ENCODE measurements at regions of chr13 and their contacts with region 1.

Region 1: GRCh38 chr13:108342369-108343289 is 73.1 kb downstream of the TNFSF13B start:
- DNase-seq: no peak
- H3K4me3 ChIP-seq: no peak overlapping the region
- H3K27ac ChIP-seq: no peak overlapping the region
- H3K4me1 ChIP-seq: no peaks in the 10 kb centered on the region
- H3K27me3 ChIP-seq: no peaks in the 10 kb centered on the region
- CTCF ChIP-seq: peak; percentile 24 to 41 (median 32)
- EP300 ChIP-seq: no peak
- POLR2A ChIP-seq: no peak

Region 2: DNA sequence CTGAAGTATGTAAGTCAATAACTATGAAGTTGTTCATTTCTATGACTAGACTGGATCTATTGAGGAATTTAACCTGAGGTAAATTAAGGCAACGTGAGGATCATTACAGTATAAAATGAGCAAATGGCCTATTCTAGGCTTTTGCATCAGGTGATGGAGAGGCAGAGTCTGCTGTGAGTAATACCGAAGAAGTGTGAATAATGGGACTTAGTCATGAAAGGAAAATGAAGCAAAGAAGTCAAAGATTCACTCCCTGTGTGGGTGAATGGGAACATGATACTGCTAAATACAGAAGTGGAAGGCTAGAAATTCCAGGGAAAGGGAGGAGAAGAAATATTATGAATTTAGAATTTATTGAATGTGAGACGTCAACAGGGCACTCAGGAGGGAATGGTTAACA is 901.4 kb before region 1 on chr13:
- intact Hi-C with region 1: no loop called
- DNase-seq: no peak
- H3K4me3 ChIP-seq: no peak overlapping the region
- H3K27ac ChIP-seq: no peak overlapping the region
- H3K4me1 ChIP-seq: no peaks in the 10 kb centered on the region
- H3K27me3 ChIP-seq: no peaks in the 10 kb centered on the region
- CTCF ChIP-seq: no peak
- EP300 ChIP-seq: no peak
- POLR2A ChIP-seq: no peak

Region 3: GRCh38 chr13:108508263-108508662 is 165.6 kb after region 1 on chr13:
- intact Hi-C with region 1: loop called (anchors 10 kb)
- DNase-seq: no peak
- H3K4me3 ChIP-seq: no peak overlapping the region
- H3K27ac ChIP-seq: no peak overlapping the region
- H3K4me1 ChIP-seq: no peaks in the 10 kb centered on the region
- H3K27me3 ChIP-seq: no peaks in the 10 kb centered on the region
- CTCF ChIP-seq: peak; percentile 14 to 24 (median 23)
- EP300 ChIP-seq: no peak
- POLR2A ChIP-seq: no peak

Measured in esophagus muscularis mucosa (tissue), 4 donors.